Gastrocnemius medialis (tissue), 4 donors: ENCODE measurements at regions of chr19 and their contacts with region 1.

Region 1: GRCh38 chr19:4909897-4910593 is 744 bp downstream of the UHRF1 start:
- DNase-seq: peak; percentile 88 to 90
- ATAC-seq: peak; percentile 90
- H3K4me3 ChIP-seq: peak overlapping the region; percentile 60 to 80 (median 66)
- H3K27ac ChIP-seq: peak overlapping the region; percentile 26 to 68 (median 63)
- H3K4me1 ChIP-seq: peaks cover 18 to 20% of the 10 kb centered on the region in 2 donors
- H3K27me3 ChIP-seq: no peaks in the 10 kb centered on the region
- CTCF ChIP-seq: no peak
- POLR2A ChIP-seq: no peak

Region 2: DNA sequence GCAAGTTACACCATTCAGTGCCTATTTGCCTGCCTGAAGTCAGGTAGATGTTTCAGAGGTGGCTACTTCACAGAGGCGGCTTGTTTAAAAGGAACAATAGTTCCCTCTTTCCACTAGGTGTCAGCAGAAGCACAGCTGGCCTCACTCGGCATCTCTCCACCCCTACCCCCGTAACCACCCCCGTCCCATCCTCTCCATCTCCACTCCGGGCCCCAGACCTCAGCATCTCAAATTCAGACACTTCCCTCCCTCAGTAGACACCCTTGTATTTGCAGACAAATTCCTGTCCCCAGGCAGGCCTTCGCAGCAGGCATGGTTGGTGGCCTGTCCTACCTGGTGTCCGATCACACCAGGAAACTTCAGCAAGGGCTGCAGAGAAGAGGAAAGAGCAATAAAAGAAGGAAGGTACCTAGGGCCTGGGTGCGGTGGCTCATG is 177.3 kb before region 1 on chr19:
- in situ Hi-C with region 1: no loop called
- intact Hi-C with region 1: no loop called
- DNase-seq: peak in 1 of 2 donors; percentile 37
- ATAC-seq: peak; percentile 90 to 93
- H3K4me3 ChIP-seq: no peak overlapping the region
- H3K27ac ChIP-seq: no peak overlapping the region
- H3K4me1 ChIP-seq: no peaks in the 10 kb centered on the region
- H3K27me3 ChIP-seq: no peaks in the 10 kb centered on the region
- CTCF ChIP-seq: peak; percentile 43 to 83 (median 79)
- POLR2A ChIP-seq: no peak

Region 3: GRCh38 chr19:4867534-4868285 is 42.3 kb before region 1 on chr19 and contains the start of gene PLIN3:
- in situ Hi-C with region 1: loop called (anchors 5 kb)
- intact Hi-C with region 1: loop called (anchors 1 kb)
- DNase-seq: peak; percentile 95 to 96
- ATAC-seq: peak; percentile 87 to 88
- H3K4me3 ChIP-seq: peak within 1 kb of the TSS; percentile 68 to 87 (median 82)
- H3K27ac ChIP-seq: peak within 1 kb of the TSS; percentile 87 to 93 (median 91)
- H3K4me1 ChIP-seq: peaks cover 5 to 14% of the 10 kb centered on the region in 2 donors
- H3K27me3 ChIP-seq: no peaks in the 10 kb centered on the region
- CTCF ChIP-seq: no peak
- POLR2A ChIP-seq: peak; percentile 73 to 76
- total RNA-seq, gene PLIN3: 53.9 to 193 (median 92.5) TPM

Region 4: GRCh38 chr19:5057861-5058260 is 147.8 kb after region 1 on chr19:
- in situ Hi-C with region 1: no loop called
- intact Hi-C with region 1: no loop called
- DNase-seq: no peak
- ATAC-seq: no peak
- H3K4me3 ChIP-seq: no peak overlapping the region
- H3K27ac ChIP-seq: peak overlapping the region in 1 of 4 donors; percentile 92
- H3K4me1 ChIP-seq: peaks cover 8 to 20% of the 10 kb centered on the region in 2 donors
- H3K27me3 ChIP-seq: no peaks in the 10 kb centered on the region
- CTCF ChIP-seq: no peak
- POLR2A ChIP-seq: no peak